ENCODE measurements at regions of chr1 and their contacts with region 1.

Region 1: DNA sequence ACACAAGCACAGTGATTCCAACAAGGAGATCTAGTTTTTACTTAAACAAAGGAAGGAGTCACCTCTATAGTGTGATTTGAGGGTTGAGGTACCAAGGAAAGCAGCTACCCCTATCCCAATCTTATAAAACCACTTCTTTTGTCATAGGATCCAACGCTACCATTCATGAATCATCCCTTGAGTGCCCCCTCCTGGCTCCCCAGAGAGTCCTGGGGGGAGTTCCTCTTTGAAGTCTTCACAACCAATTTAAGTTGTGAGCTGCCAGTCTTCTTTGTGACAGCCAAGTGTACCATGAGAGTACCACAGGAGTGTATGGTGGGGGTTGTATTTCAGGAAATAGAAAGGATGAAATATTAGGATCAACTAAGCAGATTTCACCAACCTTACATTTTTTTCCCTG is 39.1 kb upstream of the NHLH2 start:
- DNase-seq: peak; percentile 21 to 48 (median 40)
- H3K4me3 ChIP-seq: no peak overlapping the region
- H3K27ac ChIP-seq: no peak overlapping the region
- H3K4me1 ChIP-seq: peaks cover 0 to 6% (median 2%) of the 10 kb centered on the region in 4 experiments
- H3K27me3 ChIP-seq: peaks cover 0 to 2% (median 0%) of the 10 kb centered on the region in 5 experiments

Region 2: GRCh38 chr1:115890580-115890979 is 10.6 kb after region 1 on chr1:
- CTCF ChIA-PET with region 1: interaction called, 13 read pairs
- POLR2A ChIA-PET with region 1: interaction called, 7 read pairs
- DNase-seq: no peak
- H3K4me3 ChIP-seq: no peak overlapping the region
- H3K27ac ChIP-seq: no peak overlapping the region
- H3K4me1 ChIP-seq: no peaks in the 10 kb centered on the region
- H3K27me3 ChIP-seq: no peaks in the 10 kb centered on the region